ENCODE measurements at regions of chr6 and their contacts with region 1.

Region 1: GRCh38 chr6:142746524-142746923 is 198.5 kb downstream of the HIVEP2 start:
- DNase-seq: peak; percentile 36 to 47
- H3K4me3 ChIP-seq: no peak overlapping the region
- H3K4me3 Mint-ChIP-seq: no peak overlapping the region
- H3K27ac Mint-ChIP-seq: no peak overlapping the region
- H3K4me1 ChIP-seq: no peaks in the 10 kb centered on the region
- H3K4me1 Mint-ChIP-seq: no peaks in the 10 kb centered on the region
- H3K27me3 ChIP-seq: no peaks in the 10 kb centered on the region
- H3K27me3 Mint-ChIP-seq: peaks cover 6% of the 10 kb centered on the region
- CTCF ChIP-seq: peak; percentile 46 to 61

Region 2: GRCh38 chr6:142671791-142672190 is 74.7 kb before region 1 on chr6:
- CTCF ChIA-PET with region 1: no interaction called
- POLR2A ChIA-PET with region 1: no interaction called
- intact Hi-C with region 1: no loop called
- DNase-seq: no peak
- H3K4me3 ChIP-seq: no peak overlapping the region
- H3K4me3 Mint-ChIP-seq: no peak overlapping the region
- H3K27ac Mint-ChIP-seq: no peak overlapping the region
- H3K4me1 ChIP-seq: no peaks in the 10 kb centered on the region
- H3K4me1 Mint-ChIP-seq: no peaks in the 10 kb centered on the region
- H3K27me3 ChIP-seq: no peaks in the 10 kb centered on the region
- H3K27me3 Mint-ChIP-seq: peaks cover 14% of the 10 kb centered on the region
- CTCF ChIP-seq: no peak

Region 3: DNA sequence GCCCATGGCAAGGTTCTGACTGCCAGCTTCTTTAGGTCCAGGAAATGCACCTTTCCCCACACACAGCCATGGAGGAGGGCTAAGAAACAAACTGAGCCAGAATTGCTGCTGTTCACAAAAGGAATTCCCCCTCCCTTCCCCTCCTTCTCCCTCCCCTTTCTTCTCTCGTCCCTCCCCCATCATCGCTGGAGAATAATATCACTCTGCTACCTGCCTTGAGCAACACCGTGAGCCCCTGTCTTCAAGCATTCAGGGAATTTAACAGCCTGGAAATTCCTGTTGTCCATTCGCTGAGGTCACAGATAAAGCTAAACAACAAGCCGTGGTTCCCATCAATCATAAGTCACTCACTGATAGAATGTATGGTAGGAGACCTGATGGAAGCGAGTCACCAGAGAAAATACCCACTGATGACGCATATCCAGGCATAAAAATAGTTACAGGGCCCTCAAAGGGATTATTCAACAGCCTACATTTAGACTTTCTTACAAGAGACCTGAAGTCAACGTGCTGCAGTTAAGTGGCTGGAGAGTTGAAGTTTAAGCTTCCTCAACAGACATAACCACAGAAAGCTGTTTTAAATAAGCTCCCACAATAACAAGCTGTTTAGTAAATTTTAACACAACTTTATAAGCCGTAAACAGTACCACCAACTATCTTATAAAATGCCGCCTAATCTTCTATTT is 138.8 kb after region 1 on chr6:
- CTCF ChIA-PET with region 1: no interaction called
- POLR2A ChIA-PET with region 1: no interaction called
- intact Hi-C with region 1: loop called (anchors 1 kb)
- DNase-seq: peak; percentile 76 to 87
- H3K4me3 ChIP-seq: no peak overlapping the region
- H3K4me3 Mint-ChIP-seq: peak overlapping the region; percentile 60
- H3K27ac Mint-ChIP-seq: peak overlapping the region; percentile 65
- H3K4me1 ChIP-seq: peaks cover 34% of the 10 kb centered on the region
- H3K4me1 Mint-ChIP-seq: peaks cover 13% of the 10 kb centered on the region
- H3K27me3 ChIP-seq: no peaks in the 10 kb centered on the region
- H3K27me3 Mint-ChIP-seq: peaks cover 5% of the 10 kb centered on the region
- CTCF ChIP-seq: no peak

Region 4: DNA sequence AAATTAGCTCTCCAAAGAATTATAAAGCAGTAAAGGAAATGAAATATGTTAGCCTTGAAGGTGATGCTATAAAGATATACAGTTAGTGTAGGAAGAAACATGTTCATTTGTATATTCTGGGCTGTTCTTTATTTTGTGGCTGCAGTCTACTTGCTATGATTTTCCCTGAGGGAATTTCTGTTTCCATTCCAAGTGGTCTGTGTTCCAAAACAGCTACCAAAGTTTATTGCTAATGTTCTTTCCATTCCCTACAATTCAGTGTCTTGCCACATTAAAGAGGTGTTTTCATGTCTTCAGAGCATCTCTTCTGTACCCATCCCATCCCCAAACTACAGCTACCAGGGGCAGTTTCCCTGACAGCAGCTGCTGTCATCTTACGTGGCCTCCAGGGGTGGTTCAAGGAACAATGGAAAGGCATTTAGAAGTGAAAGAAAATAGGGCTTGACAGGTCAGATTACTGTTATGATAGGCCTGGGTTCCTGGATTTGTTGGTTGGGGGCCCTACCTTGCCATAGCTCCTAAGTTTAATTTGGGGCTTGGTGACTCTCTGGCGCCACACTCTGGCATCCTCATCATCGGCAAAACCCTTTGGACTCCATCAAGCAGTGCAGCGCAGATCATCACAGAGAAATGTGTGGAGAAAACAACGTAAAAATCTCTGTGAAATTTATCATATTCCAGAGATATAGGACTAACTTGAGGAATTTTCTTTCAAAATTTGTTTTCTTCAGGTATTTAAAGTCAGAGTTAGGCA is 280.3 kb after region 1 on chr6:
- CTCF ChIA-PET with region 1: no interaction called
- POLR2A ChIA-PET with region 1: no interaction called
- intact Hi-C with region 1: loop called (anchors 1 kb)
- DNase-seq: peak in 1 of 2 experiments; percentile 25
- H3K4me3 ChIP-seq: no peak overlapping the region
- H3K4me3 Mint-ChIP-seq: no peak overlapping the region
- H3K27ac Mint-ChIP-seq: no peak overlapping the region
- H3K4me1 ChIP-seq: no peaks in the 10 kb centered on the region
- H3K4me1 Mint-ChIP-seq: no peaks in the 10 kb centered on the region
- H3K27me3 ChIP-seq: no peaks in the 10 kb centered on the region
- H3K27me3 Mint-ChIP-seq: no peaks in the 10 kb centered on the region
- CTCF ChIP-seq: peak; percentile 30 to 44

Measured in Caco-2 (cell line).